ENCODE measurements at regions of chr17 and their contacts with region 1.

Region 1: DNA sequence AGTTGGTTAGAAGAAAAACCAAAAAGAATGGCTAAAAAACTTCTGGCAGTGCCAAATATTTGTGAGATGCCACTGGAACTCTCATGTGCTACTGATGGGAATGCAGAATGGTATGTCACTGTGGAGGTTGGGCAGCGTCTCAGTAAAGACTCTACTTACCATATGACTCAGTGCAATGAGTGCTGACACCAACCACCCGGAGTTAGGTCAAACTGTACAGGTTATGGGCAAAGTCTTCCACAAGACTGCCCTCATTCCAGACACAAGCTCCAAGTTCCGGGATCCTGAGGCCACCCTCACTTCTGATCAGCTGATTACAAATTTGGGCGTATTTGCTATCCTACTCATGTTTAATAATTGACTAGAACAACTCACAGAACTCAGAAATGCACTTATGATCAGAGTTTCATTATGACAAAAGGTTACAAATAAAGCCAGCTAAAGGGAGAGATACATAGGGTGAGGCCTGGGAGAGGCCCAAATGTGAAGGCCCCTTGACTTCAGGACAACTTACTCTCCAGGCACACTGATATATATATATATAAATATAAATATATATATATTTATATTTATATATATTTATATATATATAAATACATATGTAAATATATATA is 114.9 kb downstream of the TRIM37 start:
- ATAC-seq: peak in 2 of 8 experiments; percentile 15 to 70
- H3K4me3 ChIP-seq: no peak overlapping the region
- H3K27ac ChIP-seq: no peak overlapping the region
- H3K4me1 ChIP-seq: peaks cover 0 to 4% of the 10 kb centered on the region in 2 donors

Region 2: DNA sequence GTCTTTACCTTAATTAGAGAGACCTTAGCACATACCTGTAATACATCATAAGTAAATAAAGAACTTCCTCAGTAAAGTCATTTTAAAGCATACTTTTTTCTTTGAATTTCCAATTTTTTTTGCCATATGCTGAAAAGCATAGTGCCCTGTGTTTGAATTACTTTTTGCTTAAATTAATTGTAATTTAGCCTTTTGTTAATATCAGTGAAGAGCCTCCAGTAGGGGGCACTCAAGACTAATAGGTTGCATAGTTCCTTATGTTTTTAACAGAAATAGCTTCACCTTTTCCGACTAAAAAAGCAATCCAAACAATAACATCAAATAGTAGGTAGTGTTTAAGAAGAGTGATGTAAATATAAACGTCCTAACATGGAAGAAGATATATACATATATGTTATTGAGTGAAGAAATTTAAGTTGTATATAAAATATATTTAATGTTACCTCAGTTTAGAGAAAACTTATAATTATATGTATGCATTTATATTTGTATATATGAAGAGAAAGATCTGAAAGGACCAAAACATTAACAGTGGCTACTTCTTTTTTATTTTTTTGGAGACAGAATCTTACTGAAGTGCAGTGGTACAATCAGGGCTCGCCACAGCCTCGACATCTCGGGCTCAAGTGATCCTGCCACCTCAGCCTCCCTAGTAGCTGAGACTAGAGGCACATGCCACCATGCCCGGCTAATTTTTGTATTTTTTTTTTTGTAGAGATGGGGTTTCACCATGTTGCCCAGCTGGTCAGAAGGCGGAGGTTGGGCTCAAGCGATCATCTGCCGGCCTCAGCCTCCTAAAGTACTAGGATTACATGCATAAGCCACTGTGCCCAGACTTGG is 280.7 kb before region 1 on chr17:
- in situ Hi-C with region 1: loop called in 1 of 9 experiments (anchors 10 kb)
- ATAC-seq: peak in 1 of 8 experiments; percentile 25
- H3K4me3 ChIP-seq: no peak overlapping the region
- H3K27ac ChIP-seq: no peak overlapping the region
- H3K4me1 ChIP-seq: no peaks in the 10 kb centered on the region